ENCODE measurements at regions of chr1 and their contacts with region 1.

Region 1: DNA sequence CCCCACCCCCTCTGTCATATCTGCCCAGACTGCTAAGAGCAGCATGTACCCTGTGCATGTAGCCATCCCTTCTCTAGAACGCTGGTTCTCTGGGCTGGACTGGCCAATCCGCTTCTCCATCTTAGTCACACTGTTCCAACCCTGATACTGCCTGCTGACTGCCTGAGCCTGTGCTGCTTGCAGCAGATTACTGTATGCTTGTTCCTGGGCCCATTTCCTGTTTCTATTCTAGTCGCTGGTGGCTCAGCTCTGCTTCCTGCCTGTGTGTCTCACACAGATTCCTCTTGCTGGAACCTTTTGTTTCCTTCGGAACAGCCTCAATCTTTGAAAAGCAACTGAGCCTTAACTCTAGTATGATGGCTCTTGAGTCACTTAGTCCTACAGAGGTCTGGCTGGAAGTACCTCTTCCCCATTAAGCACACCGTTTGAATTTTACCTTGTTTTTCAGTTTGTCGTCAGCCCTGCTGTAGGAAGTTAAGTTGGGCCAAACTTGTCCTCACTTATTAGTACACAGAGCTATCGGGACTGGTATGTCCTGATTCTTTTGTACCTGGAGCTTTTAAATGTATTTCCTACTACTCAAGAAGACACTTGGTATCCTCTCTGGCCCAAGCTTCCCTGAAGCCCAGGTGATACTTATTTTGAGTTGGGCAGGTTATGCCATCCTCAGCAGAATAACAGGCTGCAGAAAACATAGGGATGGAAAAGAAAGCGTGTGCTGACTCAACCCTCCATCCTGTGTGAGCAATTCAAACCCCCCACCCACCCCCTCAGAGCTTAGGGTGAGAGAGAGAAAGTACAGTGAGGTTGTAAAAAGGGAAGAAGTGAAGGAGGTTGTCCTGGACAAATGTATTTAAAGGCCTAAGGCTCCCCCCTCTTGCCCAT is 43.4 kb upstream of the PIGV start:
- DNase-seq: peak; percentile 84
- H3K4me3 Mint-ChIP-seq: peak overlapping the region; percentile 73
- H3K27ac Mint-ChIP-seq: peak overlapping the region; percentile 93
- H3K4me1 Mint-ChIP-seq: peaks cover 77% of the 10 kb centered on the region
- H3K27me3 Mint-ChIP-seq: no peaks in the 10 kb centered on the region

Region 2: DNA sequence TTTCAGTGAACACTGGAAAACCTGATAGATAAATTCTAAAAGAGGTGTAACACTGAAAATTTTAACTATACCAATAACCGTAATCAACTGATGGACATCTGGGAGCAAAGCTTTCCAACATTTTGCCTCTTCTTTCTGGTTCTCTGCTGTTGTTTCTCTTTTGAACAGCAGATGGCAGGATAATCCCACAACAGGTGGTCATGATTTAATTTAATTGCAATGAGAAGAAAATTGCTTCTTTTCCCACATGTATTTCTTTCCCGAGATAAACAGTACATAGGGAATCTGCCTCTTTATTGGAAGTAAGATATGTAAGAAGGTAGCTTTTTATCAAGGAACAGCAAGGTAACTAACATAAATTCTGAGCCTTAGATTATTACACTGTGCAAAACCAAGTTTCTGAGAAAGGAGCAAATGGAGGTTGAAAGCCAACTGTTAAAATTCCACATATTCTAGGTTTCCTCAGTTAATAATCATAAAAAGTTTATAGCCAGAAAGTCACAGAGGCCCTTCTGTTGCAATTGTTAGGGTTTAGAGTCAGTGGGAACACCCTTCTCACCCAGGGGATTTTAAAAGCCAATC is 141.8 kb before region 1 on chr1:
- intact Hi-C with region 1: loop called (anchors 2 kb)
- DNase-seq: peak; percentile 36
- H3K4me3 Mint-ChIP-seq: no peak overlapping the region
- H3K27ac Mint-ChIP-seq: no peak overlapping the region
- H3K4me1 Mint-ChIP-seq: peaks cover 15% of the 10 kb centered on the region
- H3K27me3 Mint-ChIP-seq: peaks cover 4% of the 10 kb centered on the region

Region 3: GRCh38 chr1:26695356-26696118 is 48.8 kb before region 1 on chr1 and contains the start of gene ARID1A:
- intact Hi-C with region 1: loop called (anchors 1 kb)
- DNase-seq: peak; percentile 96
- H3K4me3 Mint-ChIP-seq: peak within 1 kb of the TSS; percentile 90
- H3K27ac Mint-ChIP-seq: peak within 1 kb of the TSS; percentile 96
- H3K4me1 Mint-ChIP-seq: peaks cover 31% of the 10 kb centered on the region
- H3K27me3 Mint-ChIP-seq: no peaks in the 10 kb centered on the region
- total RNA-seq, gene ARID1A: 130 and 132 TPM in 2 replicates

Region 4: GRCh38 chr1:26701995-26702679 is 42.2 kb before region 1 on chr1:
- intact Hi-C with region 1: loop called (anchors 1 kb)
- DNase-seq: no peak
- H3K4me3 Mint-ChIP-seq: no peak overlapping the region
- H3K27ac Mint-ChIP-seq: no peak overlapping the region
- H3K4me1 Mint-ChIP-seq: peaks cover 23% of the 10 kb centered on the region
- H3K27me3 Mint-ChIP-seq: no peaks in the 10 kb centered on the region

Region 5: GRCh38 chr1:26723013-26723991 is 21.0 kb before region 1 on chr1:
- intact Hi-C with region 1: loop called (anchors 1 kb)
- DNase-seq: peak; percentile 25
- H3K4me3 Mint-ChIP-seq: peak overlapping the region; percentile 55
- H3K27ac Mint-ChIP-seq: peak overlapping the region; percentile 35
- H3K4me1 Mint-ChIP-seq: peaks cover 82% of the 10 kb centered on the region
- H3K27me3 Mint-ChIP-seq: no peaks in the 10 kb centered on the region

Region 6: GRCh38 chr1:26733982-26734381 is 10.3 kb before region 1 on chr1:
- intact Hi-C with region 1: loop called (anchors 1 kb)
- DNase-seq: peak; percentile 24
- H3K4me3 Mint-ChIP-seq: peak overlapping the region; percentile 33
- H3K27ac Mint-ChIP-seq: peak overlapping the region; percentile 71
- H3K4me1 Mint-ChIP-seq: peaks cover 53% of the 10 kb centered on the region
- H3K27me3 Mint-ChIP-seq: no peaks in the 10 kb centered on the region

Region 7: DNA sequence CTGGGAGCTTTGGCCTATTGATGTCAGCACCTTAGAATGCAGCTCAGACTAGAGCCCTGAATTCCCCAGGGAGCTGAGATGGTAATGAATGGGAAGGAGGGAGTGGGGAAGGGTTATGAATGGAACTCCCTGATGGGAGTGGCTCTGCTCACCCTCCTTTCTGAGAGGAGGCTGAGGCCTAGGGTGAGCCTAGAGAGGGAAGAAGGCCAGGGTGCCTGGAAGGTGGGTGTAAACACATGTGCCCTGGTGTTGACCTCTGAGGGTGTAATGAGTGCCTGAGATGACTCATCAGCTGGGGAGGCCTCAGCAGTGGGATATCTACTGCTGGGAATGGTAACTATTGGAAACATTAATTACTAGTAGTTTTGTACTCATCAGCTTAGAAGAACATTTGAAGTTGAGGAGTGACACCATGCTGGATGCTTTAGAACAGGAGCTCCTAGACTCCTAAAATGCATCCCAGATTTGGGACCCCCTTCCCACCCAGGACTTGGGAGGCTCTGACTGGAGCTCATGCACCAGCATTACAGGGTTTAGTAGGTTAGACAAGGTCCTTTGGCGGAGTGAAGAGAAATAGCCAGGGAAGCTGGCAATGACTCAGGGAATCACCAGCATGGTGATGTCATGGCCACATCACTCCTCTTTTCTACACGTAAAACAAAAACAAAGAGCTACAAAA is 27.5 kb after region 1 on chr1:
- intact Hi-C with region 1: loop called (anchors 1 kb)
- DNase-seq: no peak
- H3K4me3 Mint-ChIP-seq: no peak overlapping the region
- H3K27ac Mint-ChIP-seq: peak overlapping the region; percentile 64
- H3K4me1 Mint-ChIP-seq: peaks cover 40% of the 10 kb centered on the region
- H3K27me3 Mint-ChIP-seq: no peaks in the 10 kb centered on the region

Region 8: DNA sequence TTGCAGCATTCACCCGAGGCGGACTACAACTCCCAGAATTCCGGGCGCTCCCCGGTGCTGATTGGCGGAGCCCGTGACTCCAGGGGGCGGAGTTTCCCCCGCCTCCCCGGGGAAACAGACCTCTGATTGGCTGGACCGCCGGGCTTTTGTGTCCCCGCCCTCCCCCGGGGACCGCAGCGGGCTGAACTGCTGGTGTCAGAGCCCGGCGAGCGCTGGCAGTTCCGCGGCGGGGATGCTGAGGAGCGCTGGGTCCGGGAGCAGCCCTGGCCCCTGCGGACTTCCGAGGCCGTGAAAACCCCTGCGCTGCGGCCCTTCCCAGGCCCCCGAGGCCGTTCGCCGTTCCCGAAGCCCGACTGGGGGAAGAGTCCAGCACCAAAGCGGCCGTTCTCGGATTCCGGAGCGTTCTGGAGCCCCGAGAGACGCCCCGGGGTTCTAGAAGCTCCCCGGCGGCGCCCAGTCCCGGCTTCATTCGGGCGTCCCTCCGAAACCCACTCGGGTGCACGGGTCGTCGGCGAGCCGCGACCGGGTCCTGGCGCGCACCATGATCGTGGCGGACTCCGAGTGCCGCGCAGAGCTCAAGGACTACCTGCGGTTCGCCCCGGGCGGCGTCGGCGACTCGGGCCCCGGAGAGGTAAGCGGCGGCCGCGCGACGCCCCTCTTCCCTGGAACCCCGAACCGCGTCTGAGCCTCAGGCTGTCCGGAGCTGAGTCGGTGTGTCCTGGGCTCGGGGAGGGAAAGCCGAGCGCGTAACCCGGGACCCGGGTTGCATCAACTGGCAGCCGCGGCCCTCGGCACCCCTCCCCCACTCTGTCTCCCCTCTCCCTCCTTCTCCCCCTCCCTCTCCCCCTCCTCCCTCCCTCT is 1515.2 kb after region 1 on chr1 and contains the start of gene SESN2:
- intact Hi-C with region 1: no loop called
- DNase-seq: peak; percentile 99
- H3K4me3 Mint-ChIP-seq: peak within 1 kb of the TSS; percentile 82
- H3K27ac Mint-ChIP-seq: peak within 1 kb of the TSS; percentile 90
- H3K4me1 Mint-ChIP-seq: peaks cover 51% of the 10 kb centered on the region
- H3K27me3 Mint-ChIP-seq: no peaks in the 10 kb centered on the region
- total RNA-seq, gene SESN2: 18.7 and 19.3 TPM in 2 replicates